Cardiac septum (tissue), 1 donor: ENCODE measurements at regions of chr22 and their contacts with region 1.

Region 1: DNA sequence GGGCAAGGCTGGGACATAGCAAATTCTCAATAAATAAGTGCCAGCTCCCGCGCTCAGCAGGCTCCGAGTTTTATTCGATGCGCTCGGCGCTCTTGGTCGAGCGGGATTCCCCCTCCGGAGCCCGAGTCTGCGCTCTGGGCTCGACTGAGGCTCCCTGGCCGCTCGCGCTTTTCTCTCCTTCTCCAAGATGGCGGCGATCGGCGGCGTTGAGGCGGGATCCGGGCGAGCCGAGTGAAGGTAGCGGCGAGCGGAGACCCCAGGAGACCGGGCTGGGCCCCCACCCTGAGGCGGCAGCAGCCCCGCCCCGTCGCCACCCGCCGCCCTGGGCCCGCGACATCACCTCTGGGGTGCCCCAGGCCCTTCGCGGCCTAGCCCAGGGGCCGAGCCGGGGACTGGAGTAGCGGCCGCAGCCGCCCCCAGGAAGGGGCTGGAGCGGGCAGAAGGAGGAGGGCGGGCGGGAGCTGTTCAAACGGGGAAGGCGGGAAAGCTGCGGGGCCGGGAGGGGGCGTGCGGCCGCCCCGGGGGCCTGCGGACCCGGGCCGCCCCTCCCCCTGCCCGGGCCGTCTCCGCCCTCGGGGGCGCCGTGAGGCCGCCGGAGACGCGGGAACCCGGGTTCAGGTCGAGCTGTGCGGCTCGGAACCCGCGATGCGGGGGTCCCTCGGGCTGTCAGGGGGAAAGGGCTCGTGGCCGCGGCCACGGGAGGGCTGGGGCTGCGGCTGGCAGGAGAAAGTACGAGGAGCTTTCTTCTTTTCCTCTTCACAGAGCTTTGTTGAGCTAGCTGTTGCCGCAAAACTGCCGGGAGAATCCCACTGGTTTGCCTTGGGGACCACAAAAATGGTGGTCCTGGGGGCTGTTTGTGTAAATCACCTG is at the start of gene HMGXB4:
- DNase-seq: peak; percentile 95
- total RNA-seq, gene HMGXB4: 10.7 TPM

Region 2: GRCh38 chr22:35299673-35300497 is 42.3 kb after region 1 on chr22 and contains the start of gene TOM1:
- intact Hi-C with region 1: loop called (anchors 1 kb)
- DNase-seq: peak; percentile 99
- total RNA-seq, gene TOM1: 37.5 TPM